H1 (cell line): ENCODE measurements at regions of chr12 and their contacts with region 1.

Region 1: DNA sequence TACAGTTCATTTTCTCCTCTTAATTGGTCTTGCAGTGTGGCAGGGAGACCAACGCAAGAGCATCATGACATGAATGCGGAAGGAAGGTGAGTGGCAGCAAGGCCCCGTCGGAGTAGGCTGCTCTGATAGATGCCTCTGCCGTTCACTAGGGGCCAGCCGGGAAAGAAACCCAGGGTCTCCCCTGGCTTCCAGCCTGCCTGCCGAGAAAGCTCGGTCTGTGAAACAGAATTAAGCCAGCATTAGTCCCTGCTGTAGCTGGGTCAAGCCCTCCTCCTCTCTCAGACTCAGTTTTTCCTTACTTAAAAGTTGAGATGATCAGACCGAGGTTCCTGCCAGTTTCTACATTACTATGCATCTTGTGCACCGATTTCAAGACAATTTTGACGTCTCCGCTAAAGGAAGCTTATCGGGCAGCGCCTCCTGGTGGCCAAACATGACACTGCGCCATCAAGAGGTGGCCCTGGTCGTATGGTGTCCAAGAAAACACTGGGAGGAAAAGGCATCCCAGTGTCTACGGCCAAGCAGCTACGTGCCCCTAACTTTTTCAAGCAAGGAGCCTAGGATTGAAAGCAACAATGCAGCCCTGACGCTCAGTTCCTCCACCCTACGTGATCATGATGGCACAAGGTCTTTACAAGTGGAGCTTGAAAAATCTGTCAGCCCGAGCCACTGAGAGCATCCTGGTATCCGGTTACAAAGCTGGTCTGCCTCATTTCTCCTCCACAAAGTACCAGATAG is 131.6 kb downstream of the KSR2 start:
- DNase-seq: peak; percentile 70 to 96
- H3K4me3 ChIP-seq: peak overlapping the region in 1 of 4 experiments; percentile 39; a peak in 1 of 8 replicates
- H3K27ac ChIP-seq: no peak overlapping the region
- H3K4me1 ChIP-seq: peaks cover 0 to 5% (median 2%) of the 10 kb centered on the region in 4 experiments; a peak in 4 of 7 replicates
- H3K27me3 ChIP-seq: no peaks in the 10 kb centered on the region
- CTCF ChIP-seq: peak; percentile 95 to 100 (median 99)
- EP300 ChIP-seq: no peak
- POLR2A ChIP-seq: no peak
- RAD21 ChIP-seq: peak; percentile 97 to 98

Region 2: GRCh38 chr12:117587631-117588287 is 249.4 kb before region 1 on chr12:
- CTCF ChIA-PET with region 1: interaction called, 67 read pairs
- POLR2A ChIA-PET with region 1: interaction called, 3 read pairs
- DNase-seq: peak; percentile 36 to 89
- H3K4me3 ChIP-seq: no peak overlapping the region
- H3K27ac ChIP-seq: no peak overlapping the region
- H3K4me1 ChIP-seq: peaks cover 6 to 10% (median 7%) of the 10 kb centered on the region in 4 experiments
- H3K27me3 ChIP-seq: no peaks in the 10 kb centered on the region
- CTCF ChIP-seq: peak; percentile 84 to 96 (median 92)
- EP300 ChIP-seq: no peak
- POLR2A ChIP-seq: no peak
- RAD21 ChIP-seq: peak; percentile 81 to 83

Region 3: GRCh38 chr12:117640511-117640910 is 196.7 kb before region 1 on chr12:
- CTCF ChIA-PET with region 1: interaction called, 13 read pairs
- POLR2A ChIA-PET with region 1: no interaction called
- DNase-seq: no peak
- H3K4me3 ChIP-seq: no peak overlapping the region
- H3K27ac ChIP-seq: no peak overlapping the region
- H3K4me1 ChIP-seq: no peaks in the 10 kb centered on the region
- H3K27me3 ChIP-seq: no peaks in the 10 kb centered on the region
- CTCF ChIP-seq: no peak
- EP300 ChIP-seq: no peak
- POLR2A ChIP-seq: no peak
- RAD21 ChIP-seq: no peak

Region 4: DNA sequence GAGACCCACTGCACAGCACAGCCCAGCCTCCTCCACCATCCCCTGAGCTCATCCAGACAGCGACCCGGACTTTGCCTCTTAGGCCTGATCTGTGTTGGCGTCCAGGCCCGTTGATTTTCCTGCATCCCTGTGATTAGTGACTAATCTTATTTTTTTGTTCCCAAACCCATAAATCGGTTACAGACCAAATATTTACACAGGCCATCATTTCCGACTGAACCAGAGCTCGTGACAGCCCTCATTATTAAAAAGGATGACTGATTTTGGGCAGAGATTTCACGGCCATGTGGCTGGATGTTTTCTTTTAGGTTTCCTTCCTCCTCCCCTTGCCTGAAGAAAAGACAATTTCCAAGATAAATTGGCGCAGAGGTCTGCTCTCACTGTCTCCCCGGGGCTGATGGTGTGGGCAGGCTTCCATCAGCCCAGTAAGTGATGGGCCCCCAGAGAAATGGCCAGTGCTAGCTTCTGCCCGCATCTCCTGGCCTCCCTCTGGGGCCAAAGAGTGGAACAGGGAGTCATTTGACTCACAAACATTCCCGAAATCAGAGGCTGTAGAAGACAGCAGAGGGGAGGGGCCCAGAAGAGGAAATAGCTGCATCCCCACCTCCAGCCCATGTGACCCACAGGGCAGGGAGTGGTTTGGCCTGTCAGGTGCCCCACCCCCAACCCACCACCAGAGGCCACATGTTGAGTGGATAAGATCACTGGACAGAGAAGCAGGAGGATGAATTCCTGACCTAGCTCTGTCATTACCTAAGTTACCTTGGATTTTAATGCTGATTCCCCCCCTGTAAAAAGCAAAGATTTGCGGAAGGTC is 151.8 kb before region 1 on chr12:
- CTCF ChIA-PET with region 1: interaction called, 12 read pairs
- POLR2A ChIA-PET with region 1: no interaction called
- DNase-seq: peak; percentile 73 to 80
- H3K4me3 ChIP-seq: no peak overlapping the region
- H3K27ac ChIP-seq: peak overlapping the region; percentile 34; the same call in 1 of the 2 replicates
- H3K4me1 ChIP-seq: peaks cover 0 to 6% (median 3%) of the 10 kb centered on the region in 4 experiments; a peak in 5 of 7 replicates
- H3K27me3 ChIP-seq: no peaks in the 10 kb centered on the region
- CTCF ChIP-seq: peak in 2 of 3 experiments; percentile 14 to 35; a peak in 2 of 4 replicates
- EP300 ChIP-seq: no peak
- POLR2A ChIP-seq: peak in 1 of 2 experiments; percentile 41; a peak in 1 of 3 replicates
- RAD21 ChIP-seq: peak; percentile 15 to 31; a peak in 3 of 4 replicates

Region 5: GRCh38 chr12:117789195-117789914 is 47.8 kb before region 1 on chr12:
- CTCF ChIA-PET with region 1: interaction called, 11 read pairs
- POLR2A ChIA-PET with region 1: no interaction called
- DNase-seq: no peak
- H3K4me3 ChIP-seq: no peak overlapping the region
- H3K27ac ChIP-seq: no peak overlapping the region; the same call in 1 of the 2 replicates
- H3K4me1 ChIP-seq: peaks cover 2 to 13% (median 10%) of the 10 kb centered on the region in 4 experiments; a peak in 5 of 7 replicates
- H3K27me3 ChIP-seq: no peaks in the 10 kb centered on the region; a peak in 2 of 7 replicates
- CTCF ChIP-seq: no peak
- EP300 ChIP-seq: no peak
- POLR2A ChIP-seq: no peak
- RAD21 ChIP-seq: no peak

Region 6: GRCh38 chr12:117818400-117818799 is 18.8 kb before region 1 on chr12:
- CTCF ChIA-PET with region 1: interaction called, 24 read pairs
- POLR2A ChIA-PET with region 1: no interaction called
- DNase-seq: no peak
- H3K4me3 ChIP-seq: no peak overlapping the region
- H3K27ac ChIP-seq: no peak overlapping the region; the same call in 1 of the 2 replicates
- H3K4me1 ChIP-seq: peaks cover 0 to 4% (median 1%) of the 10 kb centered on the region in 4 experiments; a peak in 1 of 7 replicates
- H3K27me3 ChIP-seq: no peaks in the 10 kb centered on the region
- CTCF ChIP-seq: no peak
- EP300 ChIP-seq: no peak
- POLR2A ChIP-seq: no peak
- RAD21 ChIP-seq: no peak

Region 7: DNA sequence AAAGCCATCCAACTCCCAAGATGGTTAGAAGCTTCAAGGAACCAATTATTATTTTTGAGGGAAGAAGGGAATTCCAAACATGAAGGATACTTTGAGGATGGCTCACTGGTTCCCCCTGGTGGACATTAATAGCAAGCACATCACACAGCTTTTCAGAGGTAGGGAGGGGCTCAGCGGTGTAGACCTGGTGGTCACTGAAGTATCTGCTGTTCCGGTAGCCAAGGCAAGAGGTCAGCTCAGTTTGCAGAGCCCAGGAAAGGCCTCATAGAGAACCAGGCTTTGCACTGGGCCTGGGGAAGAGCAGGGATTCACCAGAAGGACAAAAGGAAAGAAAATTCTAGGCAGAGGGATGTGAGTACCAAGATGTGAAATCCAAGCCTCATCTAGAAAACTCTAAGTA is 12.9 kb after region 1 on chr12:
- CTCF ChIA-PET with region 1: interaction called, 65 read pairs
- POLR2A ChIA-PET with region 1: no interaction called
- DNase-seq: peak; percentile 29 to 57
- H3K4me3 ChIP-seq: no peak overlapping the region
- H3K27ac ChIP-seq: no peak overlapping the region
- H3K4me1 ChIP-seq: peaks cover 0 to 10% (median 3%) of the 10 kb centered on the region in 4 experiments; a peak in 4 of 7 replicates
- H3K27me3 ChIP-seq: no peaks in the 10 kb centered on the region
- CTCF ChIP-seq: peak; percentile 63 to 98 (median 94)
- EP300 ChIP-seq: no peak
- POLR2A ChIP-seq: no peak
- RAD21 ChIP-seq: peak; percentile 77 to 81

Region 8: DNA sequence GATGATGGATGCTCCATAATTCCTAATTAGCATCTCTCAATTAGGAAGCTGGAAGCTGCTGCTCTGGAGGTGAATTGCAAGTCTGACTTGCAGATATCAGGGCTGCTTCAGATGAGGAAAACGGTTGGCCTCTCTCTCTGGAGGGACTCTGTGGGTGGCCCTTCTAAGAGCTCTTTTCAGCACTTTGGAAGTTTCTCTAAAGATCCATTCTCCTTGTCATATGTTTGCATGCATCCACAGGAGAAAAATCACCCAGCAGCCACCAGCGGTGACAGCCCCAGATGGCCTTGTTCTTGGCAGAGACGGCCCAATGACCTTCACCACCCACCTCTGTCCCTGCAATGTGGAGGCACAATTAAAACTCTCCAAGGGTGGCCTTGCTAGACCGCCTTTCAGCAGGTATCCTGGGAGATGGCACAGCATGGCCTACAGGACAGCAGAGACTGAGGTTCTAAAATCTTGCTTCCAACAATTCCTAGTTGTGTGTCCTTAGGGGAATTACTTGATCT is 89.3 kb after region 1 on chr12:
- CTCF ChIA-PET with region 1: no interaction called
- POLR2A ChIA-PET with region 1: no interaction called
- DNase-seq: no peak
- H3K4me3 ChIP-seq: no peak overlapping the region
- H3K27ac ChIP-seq: no peak overlapping the region
- H3K4me1 ChIP-seq: no peaks in the 10 kb centered on the region
- H3K27me3 ChIP-seq: no peaks in the 10 kb centered on the region
- CTCF ChIP-seq: no peak
- EP300 ChIP-seq: no peak
- POLR2A ChIP-seq: no peak
- RAD21 ChIP-seq: no peak